ENCODE measurements at regions of chr4 and their contacts with region 1.

Region 1: DNA sequence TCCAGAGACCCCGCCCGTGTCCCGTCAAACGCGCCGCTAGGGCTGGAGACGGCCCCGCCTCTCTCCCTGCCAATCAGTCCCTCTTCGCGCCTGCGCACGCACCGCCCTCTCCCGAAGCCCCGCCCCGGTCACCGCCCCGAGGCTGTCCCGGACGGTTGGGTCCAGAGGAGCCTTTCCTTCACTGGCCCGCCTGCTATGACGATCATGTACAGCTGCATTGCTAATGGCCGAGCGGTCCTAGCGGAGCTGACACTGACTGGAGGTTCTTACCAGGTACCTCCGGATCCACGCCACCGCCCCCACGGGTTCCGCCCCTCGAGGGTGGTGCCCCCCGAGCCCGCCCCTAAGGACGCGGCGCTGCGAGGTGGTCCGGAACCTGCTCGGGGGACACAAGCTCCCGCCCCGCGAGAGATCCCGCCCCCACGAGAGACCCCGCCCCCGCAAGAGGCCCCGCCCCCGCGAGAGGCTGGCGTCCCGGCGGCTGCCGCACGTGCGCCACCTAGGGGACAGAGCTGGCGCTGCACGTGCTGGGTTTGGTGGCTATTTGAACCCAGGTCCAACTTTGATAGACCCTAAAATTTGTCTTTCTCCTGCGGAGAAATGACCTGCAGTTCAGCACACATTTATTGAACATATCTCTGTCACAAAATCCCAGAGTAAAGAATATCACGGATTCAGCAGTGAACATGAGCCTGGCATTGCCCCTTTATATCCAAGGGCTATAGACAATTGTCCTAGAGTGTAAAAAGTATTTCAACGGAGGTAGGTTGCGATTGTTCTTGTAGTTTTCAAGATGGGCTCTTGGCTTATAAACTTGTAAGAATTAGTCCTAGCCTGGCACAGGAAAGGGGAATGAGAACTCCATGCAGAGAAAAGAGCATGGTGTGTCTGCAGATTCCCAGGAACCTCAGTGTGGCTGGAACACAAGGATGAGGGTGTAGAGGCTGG is 88.7 kb downstream of the HNRNPD start:
- DNase-seq: peak; percentile 99 to 100 (median 99)
- ATAC-seq: peak; percentile 100
- H3K4me3 ChIP-seq: peak overlapping the region; percentile 61
- H3K27ac ChIP-seq: no peak overlapping the region
- H3K4me1 ChIP-seq: no peaks in the 10 kb centered on the region
- H3K27me3 ChIP-seq: no peaks in the 10 kb centered on the region

Region 2: DNA sequence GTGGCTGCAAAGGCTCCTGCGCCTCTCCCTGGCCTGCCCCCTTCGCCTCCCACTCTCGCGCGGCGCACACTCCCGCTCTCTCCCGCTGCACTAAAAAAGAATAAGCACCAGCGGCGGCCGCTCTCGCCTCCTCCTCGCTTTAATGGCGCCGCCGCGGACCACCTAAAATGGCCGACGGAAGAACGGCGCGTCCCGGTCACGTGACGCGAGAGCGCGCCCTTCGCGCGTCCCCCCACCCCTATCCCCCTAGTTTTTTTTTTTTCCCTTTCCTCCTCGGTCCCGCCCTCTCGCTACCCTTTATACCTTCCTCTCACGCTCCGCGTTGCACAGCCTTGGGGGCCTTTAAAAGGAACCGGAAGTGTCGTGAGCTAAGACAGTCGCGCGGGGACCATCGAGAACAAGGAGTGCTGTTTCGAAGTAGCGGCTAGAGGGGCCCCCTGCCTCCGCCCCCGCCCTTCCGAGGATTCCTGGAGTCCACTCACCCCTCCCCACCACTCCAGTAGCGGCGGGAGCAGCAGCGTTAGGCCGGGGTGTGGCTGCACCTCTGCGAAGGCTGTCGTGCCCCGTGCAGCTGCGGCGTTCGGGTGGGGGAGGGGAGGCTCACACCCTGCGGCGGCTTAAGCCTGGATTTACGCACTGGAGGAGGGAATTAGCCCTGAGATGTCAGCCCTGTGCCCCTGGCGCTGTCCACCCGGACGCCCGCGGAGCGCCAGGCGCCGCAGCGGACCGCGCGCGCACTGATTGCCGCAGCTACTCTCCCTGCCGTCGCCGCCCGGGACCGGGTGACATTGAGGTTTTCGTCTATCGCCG is 88.9 kb after region 1 on chr4 and contains the start of gene HNRNPD:
- intact Hi-C with region 1: loop called in 1 of 4 experiments (anchors 10 kb)
- DNase-seq: peak; percentile 98 to 99 (median 99)
- ATAC-seq: peak; percentile 97 to 98
- H3K4me3 ChIP-seq: peak within 1 kb of the TSS; percentile 88
- H3K27ac ChIP-seq: peak within 1 kb of the TSS; percentile 98
- H3K4me1 ChIP-seq: peaks cover 3% of the 10 kb centered on the region
- H3K27me3 ChIP-seq: no peaks in the 10 kb centered on the region
- total RNA-seq, gene HNRNPD: 128 to 141 (median 135) TPM